ENCODE measurements at regions of chrX and their contacts with region 1.

Region 1: GRCh38 chrX:57156397-57157049 is 19.3 kb upstream of the SPIN2A start:
- DNase-seq: peak; percentile 12
- H3K4me3 Mint-ChIP-seq: no peak overlapping the region
- H3K27ac Mint-ChIP-seq: no peak overlapping the region
- H3K4me1 Mint-ChIP-seq: no peaks in the 10 kb centered on the region
- H3K27me3 Mint-ChIP-seq: no peaks in the 10 kb centered on the region
- CTCF ChIP-seq: no peak

Region 2: GRCh38 chrX:56797574-56798338 is 358.8 kb before region 1 on chrX:
- CTCF ChIA-PET with region 1: no interaction called
- intact Hi-C with region 1: no loop called
- DNase-seq: peak; percentile 6
- H3K4me3 Mint-ChIP-seq: no peak overlapping the region
- H3K27ac Mint-ChIP-seq: no peak overlapping the region
- H3K4me1 Mint-ChIP-seq: no peaks in the 10 kb centered on the region
- H3K27me3 Mint-ChIP-seq: no peaks in the 10 kb centered on the region
- CTCF ChIP-seq: no peak

Region 3: GRCh38 chrX:56920338-56920997 is 236.1 kb before region 1 on chrX:
- CTCF ChIA-PET with region 1: no interaction called
- intact Hi-C with region 1: no loop called
- DNase-seq: no peak
- H3K4me3 Mint-ChIP-seq: no peak overlapping the region
- H3K27ac Mint-ChIP-seq: no peak overlapping the region
- H3K4me1 Mint-ChIP-seq: no peaks in the 10 kb centered on the region
- H3K27me3 Mint-ChIP-seq: no peaks in the 10 kb centered on the region
- CTCF ChIP-seq: no peak

Region 4: DNA sequence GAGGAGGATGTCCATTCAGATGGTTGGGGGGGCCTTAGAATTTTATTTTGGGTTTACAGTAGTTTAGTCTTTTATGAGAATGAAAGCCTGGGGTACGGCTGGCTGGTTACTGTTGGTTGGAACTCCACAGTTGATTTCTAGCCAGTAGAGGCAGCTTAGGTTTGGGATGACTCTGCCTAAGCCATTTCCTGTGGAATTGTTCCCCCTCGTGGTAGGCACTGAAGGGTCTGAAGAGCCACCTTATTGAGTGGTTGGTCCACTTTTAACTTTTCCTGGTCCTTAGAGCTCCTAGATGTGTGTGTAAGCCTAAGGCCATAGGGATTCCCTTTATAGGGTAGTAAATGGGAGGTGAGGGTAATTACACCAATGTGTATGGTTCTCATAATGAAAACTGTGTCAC is 180.9 kb before region 1 on chrX:
- CTCF ChIA-PET with region 1: no interaction called
- intact Hi-C with region 1: no loop called
- DNase-seq: no peak
- H3K4me3 Mint-ChIP-seq: no peak overlapping the region
- H3K27ac Mint-ChIP-seq: no peak overlapping the region
- H3K4me1 Mint-ChIP-seq: peaks cover 8% of the 10 kb centered on the region
- H3K27me3 Mint-ChIP-seq: no peaks in the 10 kb centered on the region
- CTCF ChIP-seq: no peak

Region 5: GRCh38 chrX:57528670-57529255 is 372.2 kb after region 1 on chrX:
- CTCF ChIA-PET with region 1: no interaction called
- intact Hi-C with region 1: loop called (anchors 5 kb)
- DNase-seq: peak; percentile 23
- H3K4me3 Mint-ChIP-seq: no peak overlapping the region
- H3K27ac Mint-ChIP-seq: no peak overlapping the region
- H3K4me1 Mint-ChIP-seq: no peaks in the 10 kb centered on the region
- H3K27me3 Mint-ChIP-seq: no peaks in the 10 kb centered on the region
- CTCF ChIP-seq: no peak

Measured in Calu3 (cell line).